ENCODE measurements at regions of chr7 and their contacts with region 1.

Region 1: GRCh38 chr7:131007394-131008330 is 273.7 kb upstream of the KLF14 start:
- DNase-seq: peak; percentile 79
- ATAC-seq: peak; percentile 56
- H3K4me3 ChIP-seq: no peak overlapping the region
- H3K27ac ChIP-seq: peak overlapping the region; percentile 80
- H3K4me1 ChIP-seq: peaks cover 31% of the 10 kb centered on the region
- H3K27me3 ChIP-seq: no peaks in the 10 kb centered on the region
- CTCF ChIP-seq: peak; percentile 74
- POLR2A ChIP-seq: no peak
- RAD21 ChIP-seq: peak; percentile 72

Region 2: GRCh38 chr7:130904031-130904757 is 103.5 kb before region 1 on chr7:
- CTCF ChIA-PET with region 1: interaction called, 3 read pairs
- POLR2A ChIA-PET with region 1: no interaction called
- dilution Hi-C with region 1: no loop called
- in situ Hi-C with region 1: no loop called
- intact Hi-C with region 1: loop called (anchors 2 kb)
- DNase-seq: peak; percentile 93
- ATAC-seq: peak; percentile 11
- H3K4me3 ChIP-seq: peak overlapping the region; percentile 2; the same call in 1 of the 2 replicates
- H3K27ac ChIP-seq: peak overlapping the region; percentile 98
- H3K4me1 ChIP-seq: peaks cover 40% of the 10 kb centered on the region
- H3K27me3 ChIP-seq: no peaks in the 10 kb centered on the region
- CTCF ChIP-seq: no peak
- POLR2A ChIP-seq: peak; percentile 72
- RAD21 ChIP-seq: no peak

Region 3: GRCh38 chr7:131664570-131664969 is 656.9 kb after region 1 on chr7:
- CTCF ChIA-PET with region 1: no interaction called
- POLR2A ChIA-PET with region 1: no interaction called
- dilution Hi-C with region 1: no loop called
- in situ Hi-C with region 1: no loop called
- intact Hi-C with region 1: no loop called
- DNase-seq: no peak
- ATAC-seq: no peak
- H3K4me3 ChIP-seq: no peak overlapping the region
- H3K27ac ChIP-seq: no peak overlapping the region
- H3K4me1 ChIP-seq: no peaks in the 10 kb centered on the region
- H3K27me3 ChIP-seq: peaks cover 11% of the 10 kb centered on the region
- CTCF ChIP-seq: no peak
- POLR2A ChIP-seq: no peak
- RAD21 ChIP-seq: no peak